ENCODE measurements at regions of chr11 and their contacts with region 1.

Region 1: GRCh38 chr11:66835768-66836405 is 7.4 kb upstream of the RCE1 start:
- DNase-seq: no peak
- ATAC-seq: no peak
- H3K4me3 Mint-ChIP-seq: no peak overlapping the region
- H3K27ac Mint-ChIP-seq: peak overlapping the region; percentile 5
- H3K4me1 Mint-ChIP-seq: peaks cover 31% of the 10 kb centered on the region
- H3K27me3 Mint-ChIP-seq: no peaks in the 10 kb centered on the region
- CTCF ChIP-seq: no peak

Region 2: DNA sequence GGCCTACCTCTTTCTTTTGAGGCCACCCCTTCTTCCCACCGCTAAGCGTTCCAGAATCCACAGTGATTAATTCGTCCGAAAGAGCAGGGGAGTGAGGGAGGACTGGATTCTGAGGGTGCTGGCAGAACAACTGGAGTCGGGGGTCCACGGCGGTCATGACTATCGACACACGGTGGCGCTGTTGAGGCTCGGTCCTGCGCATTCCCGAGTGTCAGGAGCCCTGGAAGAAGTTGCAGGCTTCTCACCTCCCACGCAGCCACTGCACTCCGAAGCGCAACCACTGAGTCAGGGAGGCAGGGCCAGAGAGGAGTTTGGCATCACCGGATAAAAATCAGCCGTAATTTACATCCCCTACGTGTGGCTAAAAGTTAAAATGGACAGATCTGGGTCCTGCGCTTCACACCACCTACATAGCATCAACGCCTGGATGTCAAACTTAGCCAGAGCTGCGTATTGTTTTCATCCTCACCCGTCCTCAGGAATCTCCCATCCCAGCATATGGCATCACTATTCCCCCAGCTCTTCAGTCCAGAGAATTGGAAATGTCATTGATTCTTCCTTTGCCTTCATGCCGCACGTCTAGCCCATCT is 256.8 kb before region 1 on chr11:
- CTCF ChIA-PET with region 1: interaction called, 3 read pairs
- POLR2A ChIA-PET with region 1: no interaction called
- intact Hi-C with region 1: loop called (anchors 1 kb)
- DNase-seq: peak; percentile 76
- ATAC-seq: peak; percentile 88
- H3K4me3 Mint-ChIP-seq: no peak overlapping the region
- H3K27ac Mint-ChIP-seq: no peak overlapping the region
- H3K4me1 Mint-ChIP-seq: peaks cover 7% of the 10 kb centered on the region
- H3K27me3 Mint-ChIP-seq: peaks cover 13% of the 10 kb centered on the region
- CTCF ChIP-seq: peak; percentile 42

Region 3: DNA sequence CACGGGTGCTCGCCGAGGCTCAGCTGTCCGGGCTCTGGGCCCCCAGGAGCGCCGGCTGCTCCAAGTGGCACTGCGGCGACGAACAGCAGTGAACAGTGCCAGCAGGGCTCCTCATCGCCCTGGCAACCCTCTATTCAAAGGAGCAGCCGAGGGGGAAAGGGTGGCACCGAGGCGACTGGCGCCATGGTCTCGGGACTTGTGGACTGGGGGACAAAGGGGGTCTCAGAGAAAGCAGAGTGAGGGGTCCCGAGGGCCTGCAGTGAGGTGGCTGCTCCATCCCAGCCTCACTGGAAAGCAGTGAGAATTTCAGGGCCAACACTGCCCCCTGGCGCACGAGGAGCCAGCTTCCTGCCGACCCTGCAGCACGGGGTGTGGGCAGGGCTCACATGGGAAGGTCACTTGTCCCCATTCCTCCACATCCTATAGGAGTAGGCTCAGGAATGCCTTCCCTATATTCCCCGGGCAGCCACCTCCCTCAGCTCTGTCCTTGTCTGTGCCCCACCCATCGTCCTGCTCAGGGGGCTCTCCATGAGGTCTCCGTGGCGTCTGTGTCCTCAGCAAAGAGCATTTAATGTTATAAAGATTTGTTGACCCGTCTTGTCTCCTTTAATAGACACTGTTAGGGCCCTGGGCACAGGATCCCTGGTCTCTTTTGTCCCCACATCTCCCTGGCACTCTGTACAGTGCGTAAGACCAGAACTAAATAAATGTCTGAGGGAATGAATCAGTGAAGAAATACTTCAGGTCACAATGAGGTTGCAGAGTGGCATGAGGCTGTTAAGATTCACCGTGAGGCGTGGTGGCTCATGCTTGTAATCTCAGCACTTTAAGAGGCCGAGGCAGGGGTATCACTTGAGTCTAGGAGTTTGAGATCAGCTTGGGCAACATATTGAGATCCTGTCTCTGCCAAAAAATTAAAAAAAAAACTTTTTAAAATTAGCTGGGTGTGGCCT is 47.4 kb after region 1 on chr11:
- CTCF ChIA-PET with region 1: interaction called, 4 read pairs
- POLR2A ChIA-PET with region 1: no interaction called
- intact Hi-C with region 1: loop called (anchors 2 kb)
- DNase-seq: peak; percentile 54
- ATAC-seq: peak; percentile 62
- H3K4me3 Mint-ChIP-seq: no peak overlapping the region
- H3K27ac Mint-ChIP-seq: no peak overlapping the region
- H3K4me1 Mint-ChIP-seq: no peaks in the 10 kb centered on the region
- H3K27me3 Mint-ChIP-seq: peaks cover 3% of the 10 kb centered on the region
- CTCF ChIP-seq: no peak

Measured in activated B cell treated with CpG ODN at 0.5 μM for 24 hours (primary cell).